ENCODE measurements at regions of chr3 and their contacts with region 1.

Region 1: GRCh38 chr3:121995161-121996137 is 26.6 kb downstream of the ILDR1 start:
- DNase-seq: peak; percentile 57
- ATAC-seq: peak; percentile 79
- H3K4me3 Mint-ChIP-seq: peak overlapping the region; percentile 47
- H3K27ac Mint-ChIP-seq: peak overlapping the region; percentile 85
- H3K4me1 Mint-ChIP-seq: peaks cover 99% of the 10 kb centered on the region
- H3K27me3 Mint-ChIP-seq: no peaks in the 10 kb centered on the region
- CTCF ChIP-seq: no peak

Region 2: GRCh38 chr3:121883507-121883906 is 111.9 kb before region 1 on chr3:
- CTCF ChIA-PET with region 1: no interaction called
- POLR2A ChIA-PET with region 1: no interaction called
- intact Hi-C with region 1: loop called (anchors 5 kb)
- DNase-seq: no peak
- ATAC-seq: peak; percentile 42
- H3K4me3 Mint-ChIP-seq: no peak overlapping the region
- H3K27ac Mint-ChIP-seq: no peak overlapping the region
- H3K4me1 Mint-ChIP-seq: peaks cover 12% of the 10 kb centered on the region
- H3K27me3 Mint-ChIP-seq: no peaks in the 10 kb centered on the region
- CTCF ChIP-seq: no peak

Region 3: GRCh38 chr3:121942116-121942788 is 53.2 kb before region 1 on chr3:
- CTCF ChIA-PET with region 1: no interaction called
- POLR2A ChIA-PET with region 1: no interaction called
- intact Hi-C with region 1: no loop called
- DNase-seq: no peak
- ATAC-seq: no peak
- H3K4me3 Mint-ChIP-seq: no peak overlapping the region
- H3K27ac Mint-ChIP-seq: no peak overlapping the region
- H3K4me1 Mint-ChIP-seq: no peaks in the 10 kb centered on the region
- H3K27me3 Mint-ChIP-seq: no peaks in the 10 kb centered on the region
- CTCF ChIP-seq: no peak

Region 4: DNA sequence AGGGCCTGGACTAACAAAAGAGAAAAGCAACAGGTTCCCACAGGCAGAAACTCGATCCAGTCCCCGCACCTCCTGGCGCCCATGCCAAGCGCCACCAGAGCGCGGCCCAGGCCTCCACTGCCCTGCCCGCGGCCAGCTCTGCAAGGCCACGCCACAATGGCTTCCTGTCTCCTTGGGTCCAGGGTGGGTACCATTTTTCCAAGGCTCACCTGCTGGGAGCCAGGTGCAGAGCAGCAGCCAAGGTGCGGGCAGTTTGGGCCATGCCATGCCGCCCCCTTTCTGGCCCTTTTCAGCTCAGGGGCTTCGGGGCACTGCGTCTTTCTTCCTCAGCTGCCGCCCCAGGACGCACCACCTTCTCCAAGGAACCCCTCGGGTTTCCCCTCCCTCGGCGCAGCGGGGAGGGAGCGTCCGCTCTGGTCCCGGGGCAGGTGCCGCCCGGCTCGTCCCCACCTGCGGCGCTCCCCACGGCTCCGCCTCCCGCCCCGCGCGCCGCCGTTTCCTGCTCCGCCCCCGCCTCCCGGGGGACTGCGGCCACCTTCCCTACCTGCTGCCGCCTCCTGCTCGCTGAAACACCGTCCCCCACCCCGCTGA is 26.5 kb after region 1 on chr3 and contains the start of gene ILDR1:
- CTCF ChIA-PET with region 1: interaction called, 10 read pairs
- POLR2A ChIA-PET with region 1: interaction called, 4 read pairs
- intact Hi-C with region 1: no loop called
- DNase-seq: peak; percentile 72
- ATAC-seq: peak; percentile 89
- H3K4me3 Mint-ChIP-seq: peak within 1 kb of the TSS; percentile 77
- H3K27ac Mint-ChIP-seq: peak within 1 kb of the TSS; percentile 50
- H3K4me1 Mint-ChIP-seq: peaks cover 52% of the 10 kb centered on the region
- H3K27me3 Mint-ChIP-seq: no peaks in the 10 kb centered on the region
- CTCF ChIP-seq: no peak
- total RNA-seq, gene ILDR1: 1.3 and 1.4 TPM in 2 replicates

Region 5: DNA sequence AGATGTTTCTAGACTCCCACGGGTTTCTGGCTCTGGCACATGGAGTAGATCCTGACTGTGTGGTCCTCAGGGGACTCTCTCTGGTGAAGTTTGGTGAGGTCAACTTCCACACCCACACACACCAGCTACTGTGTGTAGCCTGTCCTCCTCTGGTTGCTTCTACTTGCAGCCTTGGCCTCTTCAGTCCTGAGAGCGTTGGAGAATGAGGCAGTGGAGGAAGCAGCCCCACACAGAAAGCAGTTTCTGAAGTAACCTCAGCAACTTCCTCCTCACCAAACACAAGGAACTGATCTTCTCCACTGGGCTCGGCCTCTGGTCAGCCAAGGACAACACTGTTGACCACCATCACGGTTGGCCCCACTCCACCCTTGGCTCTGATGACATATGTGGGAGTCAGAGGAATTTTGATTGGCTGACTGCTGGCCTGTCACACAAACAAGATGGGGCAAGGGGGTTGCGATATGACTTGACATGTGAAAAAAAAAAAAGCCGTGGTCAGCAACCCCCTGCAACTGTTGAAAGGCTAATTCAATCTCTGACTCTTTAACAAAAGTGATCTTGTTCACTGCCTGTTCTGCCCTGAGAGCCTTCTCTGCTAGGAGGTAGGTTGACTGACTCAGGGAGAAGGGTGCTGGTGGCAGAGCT is 79.3 kb after region 1 on chr3:
- CTCF ChIA-PET with region 1: interaction called, 12 read pairs
- POLR2A ChIA-PET with region 1: interaction called, 11 read pairs
- intact Hi-C with region 1: loop called (anchors 1 kb)
- DNase-seq: peak; percentile 32
- ATAC-seq: peak; percentile 18
- H3K4me3 Mint-ChIP-seq: peak overlapping the region; percentile 62
- H3K27ac Mint-ChIP-seq: peak overlapping the region; percentile 89
- H3K4me1 Mint-ChIP-seq: peaks cover 74% of the 10 kb centered on the region
- H3K27me3 Mint-ChIP-seq: no peaks in the 10 kb centered on the region
- CTCF ChIP-seq: no peak

Region 6: GRCh38 chr3:122101646-122102045 is 106.2 kb after region 1 on chr3:
- CTCF ChIA-PET with region 1: interaction called, 10 read pairs
- POLR2A ChIA-PET with region 1: interaction called, 4 read pairs
- intact Hi-C with region 1: no loop called
- DNase-seq: no peak
- ATAC-seq: peak; percentile 63
- H3K4me3 Mint-ChIP-seq: no peak overlapping the region
- H3K27ac Mint-ChIP-seq: peak overlapping the region; percentile 51
- H3K4me1 Mint-ChIP-seq: peaks cover 46% of the 10 kb centered on the region
- H3K27me3 Mint-ChIP-seq: no peaks in the 10 kb centered on the region
- CTCF ChIP-seq: no peak

Region 7: GRCh38 chr3:122383771-122384697 is 388.6 kb after region 1 on chr3 and contains the start of gene FAM162A:
- CTCF ChIA-PET with region 1: no interaction called
- POLR2A ChIA-PET with region 1: no interaction called
- intact Hi-C with region 1: loop called (anchors 5 kb)
- DNase-seq: peak; percentile 93
- ATAC-seq: peak; percentile 94
- H3K4me3 Mint-ChIP-seq: peak within 1 kb of the TSS; percentile 94
- H3K27ac Mint-ChIP-seq: peak within 1 kb of the TSS; percentile 91
- H3K4me1 Mint-ChIP-seq: peaks cover 38% of the 10 kb centered on the region
- H3K27me3 Mint-ChIP-seq: no peaks in the 10 kb centered on the region
- CTCF ChIP-seq: no peak
- total RNA-seq, gene FAM162A: 28.5 and 33.9 TPM in 2 replicates